PC-3 (cell line): ENCODE measurements at regions of chr13 and their contacts with region 1.

Region 1: DNA sequence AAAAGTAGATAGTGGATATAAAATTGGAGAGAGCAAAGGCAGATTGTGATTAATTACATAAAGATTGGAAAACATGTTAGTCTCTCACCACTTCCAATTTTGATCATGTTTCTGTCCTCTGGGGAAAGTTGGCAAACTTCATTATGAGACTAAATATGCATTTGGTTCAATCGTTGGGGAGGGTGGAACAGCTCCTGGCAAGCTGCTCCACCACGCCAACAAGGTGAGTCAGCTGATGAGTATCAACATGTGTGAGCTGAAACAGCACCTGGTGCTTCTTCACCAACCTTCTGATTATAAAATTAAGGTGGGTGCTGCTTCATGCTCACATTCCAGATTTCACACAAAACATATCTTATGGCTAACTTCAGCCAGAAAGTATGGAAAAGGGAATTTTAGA is 1784.6 kb downstream of the SLITRK5 start:
- DNase-seq: peak; percentile 60
- ATAC-seq: peak; percentile 54
- H3K4me3 ChIP-seq: no peak overlapping the region
- H3K27ac ChIP-seq: no peak overlapping the region
- H3K4me1 ChIP-seq: peaks cover 14% of the 10 kb centered on the region; the same call in 1 of the 2 replicates
- H3K27me3 ChIP-seq: no peaks in the 10 kb centered on the region
- CTCF ChIP-seq: no peak

Region 2: GRCh38 chr13:89352384-89352783 is 103.4 kb before region 1 on chr13:
- CTCF ChIA-PET with region 1: no interaction called
- POLR2A ChIA-PET with region 1: no interaction called
- intact Hi-C with region 1: no loop called
- DNase-seq: no peak
- ATAC-seq: no peak
- H3K4me3 ChIP-seq: no peak overlapping the region
- H3K27ac ChIP-seq: no peak overlapping the region
- H3K4me1 ChIP-seq: no peaks in the 10 kb centered on the region
- H3K27me3 ChIP-seq: no peaks in the 10 kb centered on the region
- CTCF ChIP-seq: no peak

Region 3: GRCh38 chr13:89401267-89401675 is 54.5 kb before region 1 on chr13:
- CTCF ChIA-PET with region 1: no interaction called
- POLR2A ChIA-PET with region 1: interaction called, 16 read pairs
- intact Hi-C with region 1: no loop called
- DNase-seq: peak; percentile 61
- ATAC-seq: peak; percentile 49
- H3K4me3 ChIP-seq: 0 out of 2 replicates have a peak overlapping the region, but pooled peaks have one; percentile 16
- H3K27ac ChIP-seq: peak overlapping the region; percentile 75
- H3K4me1 ChIP-seq: peaks cover 11% of the 10 kb centered on the region
- H3K27me3 ChIP-seq: no peaks in the 10 kb centered on the region
- CTCF ChIP-seq: no peak

Region 4: GRCh38 chr13:89584058-89584620 is 128.4 kb after region 1 on chr13:
- CTCF ChIA-PET with region 1: no interaction called
- POLR2A ChIA-PET with region 1: no interaction called
- intact Hi-C with region 1: no loop called
- DNase-seq: no peak
- ATAC-seq: no peak
- H3K4me3 ChIP-seq: no peak overlapping the region
- H3K27ac ChIP-seq: no peak overlapping the region
- H3K4me1 ChIP-seq: no peaks in the 10 kb centered on the region
- H3K27me3 ChIP-seq: no peaks in the 10 kb centered on the region
- CTCF ChIP-seq: no peak